Activated T-helper 2 cell treated with anti-CD3 and anti-CD28 coated beads, Interferon-gamma antibody, Interleukin-2, Interleukin-4, amounts not matched to agents 10 μg/mL and 5 μg/mL and 100 μg/mL, durations not matched to agents 14 hours and 24 hours and 36 hours (primary cell): ENCODE measurements at regions of chrX and their contacts with region 1.

Region 1: GRCh38 chrX:30735839-30736238 is 82.6 kb downstream of the GK start:
- DNase-seq: peak; percentile 66
- H3K4me3 Mint-ChIP-seq: no peak overlapping the region
- H3K27ac Mint-ChIP-seq: no peak overlapping the region
- H3K4me1 Mint-ChIP-seq: peaks cover 9% of the 10 kb centered on the region
- H3K27me3 Mint-ChIP-seq: no peaks in the 10 kb centered on the region

Region 2: DNA sequence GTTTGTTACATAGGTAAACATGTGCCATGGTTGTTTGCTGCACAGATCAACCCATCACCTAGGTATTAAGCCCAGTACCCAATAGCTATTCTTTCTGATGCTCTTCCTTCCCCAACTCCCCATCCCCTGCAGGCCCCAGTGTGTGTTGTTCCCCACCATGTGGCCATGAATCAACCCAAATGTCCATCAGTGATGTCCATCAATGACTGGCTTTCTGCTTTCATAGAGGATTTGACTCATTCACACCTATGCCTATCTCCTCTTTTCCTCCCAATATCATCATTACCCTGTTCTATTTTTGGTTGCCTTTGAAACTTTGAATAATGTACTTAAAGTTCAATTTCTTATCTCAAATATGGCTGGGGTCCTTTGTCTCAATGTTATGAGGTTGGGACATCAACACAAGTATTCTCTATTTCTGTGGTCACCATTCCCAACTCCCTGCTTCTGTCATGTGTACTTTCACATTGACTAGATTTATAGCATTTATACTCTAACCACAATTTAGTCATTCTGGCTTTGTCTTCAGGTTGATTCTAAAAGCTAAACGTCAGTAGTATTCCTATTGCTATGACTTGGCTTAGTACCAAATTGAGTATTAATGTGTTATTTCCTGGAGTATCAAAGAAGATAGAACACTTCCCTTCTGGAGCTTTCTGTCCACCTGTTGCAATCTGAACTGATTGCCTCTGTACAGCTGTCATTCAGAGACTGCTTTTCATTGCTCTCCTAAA is 46.0 kb after region 1 on chrX:
- intact Hi-C with region 1: loop called (anchors 10 kb)
- DNase-seq: no peak
- H3K4me3 Mint-ChIP-seq: no peak overlapping the region
- H3K27ac Mint-ChIP-seq: no peak overlapping the region
- H3K4me1 Mint-ChIP-seq: peaks cover 22% of the 10 kb centered on the region
- H3K27me3 Mint-ChIP-seq: no peaks in the 10 kb centered on the region

Region 3: GRCh38 chrX:30822068-30822681 is 86.3 kb after region 1 on chrX:
- intact Hi-C with region 1: loop called (anchors 5 kb)
- DNase-seq: no peak
- H3K4me3 Mint-ChIP-seq: no peak overlapping the region
- H3K27ac Mint-ChIP-seq: no peak overlapping the region
- H3K4me1 Mint-ChIP-seq: peaks cover 9% of the 10 kb centered on the region
- H3K27me3 Mint-ChIP-seq: peaks cover 2% of the 10 kb centered on the region

Region 4: GRCh38 chrX:30971774-30972603 is 236.2 kb after region 1 on chrX:
- intact Hi-C with region 1: loop called (anchors 5 kb)
- DNase-seq: peak; percentile 8
- H3K4me3 Mint-ChIP-seq: peak overlapping the region; percentile 78
- H3K27ac Mint-ChIP-seq: peak overlapping the region; percentile 80
- H3K4me1 Mint-ChIP-seq: peaks cover 15% of the 10 kb centered on the region
- H3K27me3 Mint-ChIP-seq: peaks cover 14% of the 10 kb centered on the region

Region 5: DNA sequence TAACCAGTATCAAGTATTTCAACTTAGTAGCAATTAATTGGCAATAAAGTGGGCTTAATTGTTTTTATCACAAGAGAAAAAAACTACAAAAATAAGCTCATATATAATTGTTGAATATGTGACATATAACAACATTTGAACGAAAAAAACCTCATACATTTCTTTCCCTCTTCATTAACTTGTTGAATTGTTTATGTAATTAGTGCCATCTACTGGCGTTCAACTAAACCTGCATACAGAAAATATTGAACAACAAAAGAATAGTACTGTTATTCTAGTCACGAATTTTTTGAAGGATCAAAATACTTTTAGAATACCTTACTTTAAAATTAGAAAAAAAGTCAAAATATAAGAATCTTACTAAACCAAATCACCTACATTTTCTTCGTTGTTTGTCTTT is 922.5 kb after region 1 on chrX:
- intact Hi-C with region 1: loop called (anchors 5 kb)
- DNase-seq: no peak
- H3K4me3 Mint-ChIP-seq: no peak overlapping the region
- H3K27ac Mint-ChIP-seq: no peak overlapping the region
- H3K4me1 Mint-ChIP-seq: no peaks in the 10 kb centered on the region
- H3K27me3 Mint-ChIP-seq: no peaks in the 10 kb centered on the region